Left cardiac atrium (tissue), 4 donors: ENCODE measurements at regions of chr12 and their contacts with region 1.

Region 1: DNA sequence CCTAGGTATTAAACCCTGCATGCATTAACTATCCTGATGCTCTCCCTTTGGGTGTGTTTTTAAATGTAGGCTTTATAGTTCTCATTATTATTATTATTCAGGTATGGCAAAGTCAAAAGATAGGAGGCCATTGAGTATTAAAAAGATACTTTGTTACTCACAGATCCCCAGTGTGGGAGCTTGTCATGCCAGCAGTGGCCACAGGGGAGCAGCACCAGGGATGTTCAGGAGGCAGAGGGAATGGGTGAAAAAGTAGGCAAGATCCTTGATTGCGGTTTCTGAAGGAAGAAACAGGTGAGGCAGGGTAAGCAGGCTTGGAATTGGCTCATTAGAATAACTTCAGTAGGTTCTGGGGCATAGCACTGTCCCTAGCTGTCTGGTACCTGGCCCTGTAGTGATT is 382.2 kb downstream of the MED13L start:
- DNase-seq: no peak
- ATAC-seq: no peak

Region 2: GRCh38 chr12:115785548-115785947 is 109.7 kb before region 1 on chr12:
- intact Hi-C with region 1: loop called in 1 of 2 experiments (anchors 10 kb)
- DNase-seq: no peak
- ATAC-seq: no peak